ENCODE measurements at regions of chr9 and their contacts with region 1.

Region 1: GRCh38 chr9:109086242-109086641 is 33.5 kb downstream of the TMEM245 start:
- DNase-seq: no peak
- ATAC-seq: peak in 1 of 2 donors; percentile 39
- H3K4me3 ChIP-seq: no peak overlapping the region
- H3K27ac ChIP-seq: no peak overlapping the region
- H3K4me1 ChIP-seq: no peaks in the 10 kb centered on the region
- H3K27me3 ChIP-seq: no peaks in the 10 kb centered on the region
- CTCF ChIP-seq: no peak
- POLR2A ChIP-seq: no peak

Region 2: GRCh38 chr9:109035684-109036423 is 50.4 kb before region 1 on chr9:
- in situ Hi-C with region 1: no loop called
- intact Hi-C with region 1: loop called (anchors 5 kb)
- DNase-seq: peak in 1 of 2 donors; percentile 17
- ATAC-seq: peak; percentile 56 to 62
- H3K4me3 ChIP-seq: no peak overlapping the region
- H3K27ac ChIP-seq: peak overlapping the region in 2 of 4 donors; percentile 6 to 49
- H3K4me1 ChIP-seq: peaks cover 0 to 20% of the 10 kb centered on the region in 2 donors
- H3K27me3 ChIP-seq: no peaks in the 10 kb centered on the region
- CTCF ChIP-seq: no peak
- POLR2A ChIP-seq: no peak

Region 3: GRCh38 chr9:110908894-110909293 is 1822.7 kb after region 1 on chr9:
- in situ Hi-C with region 1: no loop called
- intact Hi-C with region 1: no loop called
- DNase-seq: no peak
- ATAC-seq: no peak
- H3K4me3 ChIP-seq: no peak overlapping the region
- H3K27ac ChIP-seq: no peak overlapping the region
- H3K4me1 ChIP-seq: no peaks in the 10 kb centered on the region
- H3K27me3 ChIP-seq: no peaks in the 10 kb centered on the region
- CTCF ChIP-seq: no peak
- POLR2A ChIP-seq: no peak

Measured in gastrocnemius medialis (tissue), 4 donors.